Activated naive CD8-positive, alpha-beta T cell treated with anti-CD3 and anti-CD28 coated beads, Interleukin-2, amount 10 ng/mL, durations not matched to agents 7 days and 5 days (primary cell): ENCODE measurements at regions of chr5 and their contacts with region 1.

Region 1: GRCh38 chr5:40437452-40437861 is 242.3 kb upstream of the PTGER4 start:
- DNase-seq: no peak
- ATAC-seq: peak; percentile 27
- H3K4me3 Mint-ChIP-seq: peak overlapping the region; percentile 39
- H3K27ac Mint-ChIP-seq: peak overlapping the region; percentile 77
- H3K4me1 Mint-ChIP-seq: peaks cover 66% of the 10 kb centered on the region
- H3K27me3 Mint-ChIP-seq: no peaks in the 10 kb centered on the region

Region 2: DNA sequence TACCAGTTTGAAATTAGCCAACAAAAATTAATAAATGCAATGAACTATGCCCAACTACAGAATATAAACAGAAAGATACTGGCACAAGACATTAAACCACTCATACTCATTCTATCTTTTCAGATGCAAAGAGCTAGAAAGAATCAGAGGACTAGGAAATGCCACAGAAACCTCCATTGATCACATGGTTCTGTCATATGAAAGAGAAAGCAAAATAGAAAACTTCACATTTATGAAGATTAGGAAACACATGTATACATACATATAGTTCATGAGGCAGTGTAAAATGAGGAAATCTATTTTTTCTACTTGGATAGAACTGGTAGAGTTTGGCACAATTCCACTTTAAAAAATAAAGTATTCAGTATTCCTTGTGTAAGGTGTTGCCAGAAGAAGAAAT is 32.8 kb before region 1 on chr5:
- POLR2A ChIA-PET with region 1: interaction called, 25 read pairs
- DNase-seq: no peak
- ATAC-seq: peak; percentile 66
- H3K4me3 Mint-ChIP-seq: peak overlapping the region; percentile 47
- H3K27ac Mint-ChIP-seq: peak overlapping the region; percentile 99
- H3K4me1 Mint-ChIP-seq: peaks cover 68% of the 10 kb centered on the region
- H3K27me3 Mint-ChIP-seq: no peaks in the 10 kb centered on the region

Region 3: GRCh38 chr5:40486437-40487275 is 49.2 kb after region 1 on chr5:
- POLR2A ChIA-PET with region 1: interaction called, 11 read pairs
- DNase-seq: peak; percentile 32
- ATAC-seq: peak; percentile 83
- H3K4me3 Mint-ChIP-seq: peak overlapping the region; percentile 49
- H3K27ac Mint-ChIP-seq: peak overlapping the region; percentile 87
- H3K4me1 Mint-ChIP-seq: peaks cover 43% of the 10 kb centered on the region
- H3K27me3 Mint-ChIP-seq: no peaks in the 10 kb centered on the region